Heart right ventricle (tissue), 16 donors: ENCODE measurements at regions of chr15 and their contacts with region 1.

Region 1: GRCh38 chr15:72199711-72200212 is 2.2 kb upstream of the GRAMD2A start:
- DNase-seq: peak; percentile 65 to 82
- ATAC-seq: peak; percentile 52 to 76 (median 62)
- H3K4me3 ChIP-seq: no peak overlapping the region
- H3K27ac ChIP-seq: peak overlapping the region in 7 of 10 donors; percentile 51 to 82 (median 75)
- H3K4me1 ChIP-seq: peaks cover 27 to 63% (median 54%) of the 10 kb centered on the region in 9 donors
- H3K27me3 ChIP-seq: peaks cover 0 to 20% (median 9%) of the 10 kb centered on the region in 7 donors
- CTCF ChIP-seq: peak; percentile 78 to 94 (median 91)

Region 2: GRCh38 chr15:72070817-72071447 is 128.8 kb before region 1 on chr15:
- intact Hi-C with region 1: no loop called
- DNase-seq: no peak
- ATAC-seq: no peak
- H3K4me3 ChIP-seq: no peak overlapping the region
- H3K27ac ChIP-seq: no peak overlapping the region
- H3K4me1 ChIP-seq: peaks cover 0 to 13% (median 5%) of the 10 kb centered on the region in 9 donors
- H3K27me3 ChIP-seq: no peaks in the 10 kb centered on the region
- CTCF ChIP-seq: no peak

Region 3: GRCh38 chr15:72222259-72222832 is 22.6 kb after region 1 on chr15:
- intact Hi-C with region 1: loop called in 2 of 10 experiments (anchors 2 kb)
- DNase-seq: peak; percentile 42 to 57
- ATAC-seq: peak in 7 of 8 donors; percentile 60 to 90 (median 79)
- H3K4me3 ChIP-seq: no peak overlapping the region
- H3K27ac ChIP-seq: peak overlapping the region in 8 of 10 donors; percentile 3 to 64 (median 37)
- H3K4me1 ChIP-seq: peaks cover 18 to 83% (median 63%) of the 10 kb centered on the region in 9 donors
- H3K27me3 ChIP-seq: no peaks in the 10 kb centered on the region
- CTCF ChIP-seq: no peak

Region 4: GRCh38 chr15:72231066-72231846 is 31.5 kb after region 1 on chr15 and contains the start of gene PKM:
- intact Hi-C with region 1: loop called in 7 of 10 experiments (anchors 1 to 5 kb)
- DNase-seq: peak; percentile 95 to 97
- ATAC-seq: peak; percentile 88 to 94 (median 91)
- H3K4me3 ChIP-seq: peak within 1 kb of the TSS; percentile 48 to 99 (median 86)
- H3K27ac ChIP-seq: peak within 1 kb of the TSS; percentile 92 to 100 (median 98)
- H3K4me1 ChIP-seq: peaks cover 20 to 53% (median 48%) of the 10 kb centered on the region in 9 donors
- H3K27me3 ChIP-seq: no peaks in the 10 kb centered on the region
- CTCF ChIP-seq: peak in 1 of 9 donors; percentile 5
- total RNA-seq, gene PKM: 851 to 1,508 (median 1,153) TPM

Region 5: GRCh38 chr15:72237286-72238224 is 37.8 kb after region 1 on chr15:
- intact Hi-C with region 1: loop called in 3 of 10 experiments (anchors 5 kb)
- DNase-seq: peak in 1 of 2 donors; percentile 25
- ATAC-seq: peak in 7 of 8 donors; percentile 24 to 95 (median 60)
- H3K4me3 ChIP-seq: peak overlapping the region in 1 of 10 donors; percentile 27
- H3K27ac ChIP-seq: peak overlapping the region in 4 of 10 donors; percentile 1 to 89 (median 42)
- H3K4me1 ChIP-seq: peaks cover 0 to 29% (median 4%) of the 10 kb centered on the region in 9 donors
- H3K27me3 ChIP-seq: no peaks in the 10 kb centered on the region
- CTCF ChIP-seq: no peak

Region 6: GRCh38 chr15:72265031-72265430 is 65.3 kb after region 1 on chr15:
- intact Hi-C with region 1: loop called in 6 of 10 experiments (anchors 5 to 10 kb)
- DNase-seq: no peak
- ATAC-seq: no peak
- H3K4me3 ChIP-seq: no peak overlapping the region
- H3K27ac ChIP-seq: no peak overlapping the region
- H3K4me1 ChIP-seq: peaks cover 0 to 3% (median 0%) of the 10 kb centered on the region in 9 donors
- H3K27me3 ChIP-seq: no peaks in the 10 kb centered on the region
- CTCF ChIP-seq: no peak

Region 7: DNA sequence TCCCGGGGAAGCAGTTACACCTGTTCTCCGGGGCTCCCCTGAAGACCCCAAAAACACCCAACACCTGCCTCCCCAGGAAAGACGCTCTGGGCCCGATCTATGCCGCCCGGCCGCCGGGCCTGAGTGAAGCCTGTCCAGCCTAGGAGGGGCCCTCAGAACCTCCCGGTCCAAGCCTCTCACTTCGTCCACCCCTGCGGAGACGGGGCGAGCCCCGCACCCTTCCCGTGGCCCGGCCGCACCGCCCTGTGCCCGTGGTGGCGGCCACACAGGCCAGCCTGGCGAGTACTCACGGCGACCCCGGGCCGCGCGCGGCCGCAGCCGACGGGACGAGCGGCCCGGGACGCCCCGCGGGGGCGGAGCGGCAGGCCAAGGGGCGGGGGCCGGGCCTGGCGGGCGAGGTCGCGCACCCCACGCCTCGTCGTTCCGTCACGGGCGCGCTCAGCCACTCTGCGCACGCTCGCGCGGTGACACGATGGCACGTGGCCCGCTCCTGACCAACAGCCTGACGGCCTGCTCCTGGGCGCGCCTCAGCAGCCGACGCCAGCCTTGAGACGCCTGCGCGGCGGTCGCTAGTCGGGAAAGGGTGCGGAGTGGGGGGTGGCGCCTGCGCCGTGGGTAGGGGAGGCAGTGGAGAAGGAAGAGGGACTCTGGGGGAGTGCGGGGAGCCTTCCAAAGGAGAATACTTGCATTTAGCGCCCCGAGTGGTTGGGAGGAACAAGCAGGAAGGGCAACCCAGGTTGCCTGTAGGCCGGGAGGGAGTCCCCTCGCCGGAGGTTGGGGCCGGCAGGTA is 72.6 kb after region 1 on chr15 and contains the start of gene PARP6:
- intact Hi-C with region 1: loop called in 6 of 10 experiments (anchors 5 to 10 kb)
- DNase-seq: peak; percentile 98 to 99
- ATAC-seq: peak; percentile 99 to 100 (median 100)
- H3K4me3 ChIP-seq: peak within 1 kb of the TSS; percentile 77 to 95 (median 90)
- H3K27ac ChIP-seq: peak within 1 kb of the TSS; percentile 37 to 98 (median 94)
- H3K4me1 ChIP-seq: peaks cover 0 to 32% (median 26%) of the 10 kb centered on the region in 9 donors
- H3K27me3 ChIP-seq: no peaks in the 10 kb centered on the region
- CTCF ChIP-seq: peak; percentile 34 to 88 (median 72)
- total RNA-seq, gene PARP6: 28.2 to 53.5 (median 37.6) TPM

Region 8: DNA sequence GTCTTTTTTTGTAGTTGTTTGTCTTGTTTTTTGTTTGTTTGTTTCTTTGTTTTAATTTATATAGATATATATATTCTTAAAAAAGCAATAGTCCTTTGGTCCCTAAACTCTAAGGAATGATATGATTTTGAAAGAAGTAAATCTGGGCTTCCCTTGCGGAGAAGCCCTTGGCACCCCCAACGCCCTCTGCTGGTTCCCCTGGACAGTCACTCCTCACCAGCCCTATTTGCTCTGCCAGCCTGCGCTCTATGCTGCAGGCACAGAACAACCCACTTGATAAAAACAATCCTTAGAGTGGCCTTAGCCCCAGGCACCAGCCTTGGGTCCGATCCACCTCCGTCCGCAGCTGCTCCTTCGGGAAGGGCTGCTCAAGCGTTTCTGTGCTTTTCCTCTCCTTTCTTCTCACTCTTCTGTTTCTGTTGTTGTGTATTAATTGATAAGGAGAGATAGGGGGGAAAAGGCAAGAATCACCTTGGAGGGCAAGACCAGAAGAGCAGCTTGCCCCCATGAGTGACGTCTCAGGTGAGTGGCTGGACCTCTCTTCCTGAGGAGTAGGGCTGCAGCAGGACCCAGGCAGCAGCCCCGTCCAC is 86.3 kb after region 1 on chr15:
- intact Hi-C with region 1: loop called in 3 of 10 experiments (anchors 2 to 10 kb)
- DNase-seq: peak in 1 of 2 donors; percentile 44
- ATAC-seq: peak in 3 of 8 donors; percentile 55 to 65 (median 58)
- H3K4me3 ChIP-seq: no peak overlapping the region
- H3K27ac ChIP-seq: no peak overlapping the region
- H3K4me1 ChIP-seq: no peaks in the 10 kb centered on the region
- H3K27me3 ChIP-seq: no peaks in the 10 kb centered on the region
- CTCF ChIP-seq: peak in 7 of 9 donors; percentile 43 to 59 (median 57)